ENCODE measurements at regions of chr6 and their contacts with region 1.

Region 1: GRCh38 chr6:5398530-5398929 is 137.2 kb downstream of the FARS2 start:
- DNase-seq: peak; percentile 20
- ATAC-seq: peak; percentile 78
- H3K4me3 ChIP-seq: no peak overlapping the region
- H3K27ac ChIP-seq: no peak overlapping the region
- H3K4me1 ChIP-seq: no peaks in the 10 kb centered on the region
- H3K27me3 ChIP-seq: no peaks in the 10 kb centered on the region
- CTCF ChIP-seq: peak; percentile 67; the same call in 1 of the 2 replicates

Region 2: GRCh38 chr6:5143634-5144311 is 254.8 kb before region 1 on chr6:
- CTCF ChIA-PET with region 1: interaction called, 8 read pairs
- POLR2A ChIA-PET with region 1: no interaction called
- in situ Hi-C with region 1: no loop called
- intact Hi-C with region 1: loop called (anchors 2 kb)
- DNase-seq: peak; percentile 46
- ATAC-seq: peak; percentile 90
- H3K4me3 ChIP-seq: no peak overlapping the region
- H3K27ac ChIP-seq: no peak overlapping the region
- H3K4me1 ChIP-seq: no peaks in the 10 kb centered on the region
- H3K27me3 ChIP-seq: no peaks in the 10 kb centered on the region
- CTCF ChIP-seq: peak; percentile 95

Region 3: GRCh38 chr6:5214570-5215052 is 183.9 kb before region 1 on chr6:
- CTCF ChIA-PET with region 1: interaction called, 6 read pairs
- POLR2A ChIA-PET with region 1: no interaction called
- in situ Hi-C with region 1: no loop called
- intact Hi-C with region 1: loop called (anchors 1 kb)
- DNase-seq: no peak
- ATAC-seq: peak; percentile 87
- H3K4me3 ChIP-seq: no peak overlapping the region
- H3K27ac ChIP-seq: no peak overlapping the region
- H3K4me1 ChIP-seq: no peaks in the 10 kb centered on the region
- H3K27me3 ChIP-seq: no peaks in the 10 kb centered on the region
- CTCF ChIP-seq: peak; percentile 83

Region 4: DNA sequence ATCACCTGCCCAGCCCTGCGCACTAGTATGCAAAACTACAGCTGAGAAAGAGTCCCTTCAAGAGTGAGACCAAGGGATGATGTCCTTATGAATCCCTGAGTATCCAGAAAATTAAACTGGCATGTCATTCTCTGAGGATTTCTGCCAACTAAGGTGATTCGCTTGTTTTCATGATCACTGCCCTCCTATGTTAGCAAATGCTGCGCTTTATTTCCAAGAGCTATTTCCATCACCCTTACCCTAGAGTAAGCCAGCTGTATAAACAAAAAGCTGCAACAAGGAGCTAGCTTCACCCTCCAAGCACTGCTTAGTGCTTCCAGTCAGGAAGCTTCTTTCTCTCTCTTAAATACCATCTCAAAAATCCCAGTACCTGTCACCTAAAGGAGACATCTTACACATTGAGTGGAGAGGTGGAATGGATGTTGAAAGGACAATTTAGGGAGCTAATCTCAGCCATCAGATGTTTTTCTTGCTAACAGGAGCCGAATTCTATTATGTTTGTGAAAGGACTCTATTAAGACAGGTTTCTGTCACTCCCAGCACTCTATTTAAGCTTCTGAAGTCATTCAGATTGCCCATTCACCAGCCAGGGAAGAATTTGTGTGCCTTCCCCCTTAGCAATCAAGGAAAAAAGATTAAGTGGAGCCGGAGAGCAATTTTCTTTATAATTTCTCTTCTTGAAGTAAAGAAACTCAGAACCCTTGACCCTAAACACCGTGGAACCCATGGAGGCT is 286.0 kb after region 1 on chr6:
- CTCF ChIA-PET with region 1: no interaction called
- POLR2A ChIA-PET with region 1: no interaction called
- in situ Hi-C with region 1: no loop called
- intact Hi-C with region 1: no loop called
- DNase-seq: no peak
- ATAC-seq: no peak
- H3K4me3 ChIP-seq: no peak overlapping the region
- H3K27ac ChIP-seq: no peak overlapping the region
- H3K4me1 ChIP-seq: no peaks in the 10 kb centered on the region
- H3K27me3 ChIP-seq: no peaks in the 10 kb centered on the region
- CTCF ChIP-seq: no peak